ENCODE measurements at regions of chr19 and their contacts with region 1.

Region 1: GRCh38 chr19:38402967-38403861 is at the start of gene FAM98C:
- DNase-seq: peak; percentile 97
- H3K4me3 ChIP-seq: peak within 1 kb of the TSS; percentile 65 to 79 (median 73)
- H3K27ac ChIP-seq: peak within 1 kb of the TSS; percentile 28
- H3K4me1 ChIP-seq: peaks cover 2% of the 10 kb centered on the region
- H3K27me3 ChIP-seq: no peaks in the 10 kb centered on the region
- CTCF ChIP-seq: peak; percentile 89 to 95
- POLR2A ChIP-seq: peak; percentile 36
- total RNA-seq, gene FAM98C: 13.0 and 15.4 TPM in 2 replicates

Region 2: GRCh38 chr19:38229585-38230073 is 173.6 kb before region 1 on chr19:
- CTCF ChIA-PET with region 1: interaction called, 24 read pairs
- POLR2A ChIA-PET with region 1: no interaction called
- dilution Hi-C with region 1: no loop called
- intact Hi-C with region 1: no loop called
- DNase-seq: peak; percentile 77
- H3K4me3 ChIP-seq: peak overlapping the region in 1 of 3 experiments; percentile 14
- H3K27ac ChIP-seq: no peak overlapping the region
- H3K4me1 ChIP-seq: peaks cover 8% of the 10 kb centered on the region
- H3K27me3 ChIP-seq: peaks cover 9 to 14% of the 10 kb centered on the region in 2 experiments
- CTCF ChIP-seq: peak in 1 of 2 donors; percentile 13
- POLR2A ChIP-seq: no peak

Region 3: GRCh38 chr19:38351865-38352395 is 51.3 kb before region 1 on chr19:
- CTCF ChIA-PET with region 1: no interaction called
- POLR2A ChIA-PET with region 1: no interaction called
- dilution Hi-C with region 1: no loop called
- intact Hi-C with region 1: no loop called
- DNase-seq: no peak
- H3K4me3 ChIP-seq: no peak overlapping the region
- H3K27ac ChIP-seq: no peak overlapping the region
- H3K4me1 ChIP-seq: no peaks in the 10 kb centered on the region
- H3K27me3 ChIP-seq: peaks cover 2 to 4% of the 10 kb centered on the region in 2 experiments
- CTCF ChIP-seq: no peak
- POLR2A ChIP-seq: no peak

Region 4: DNA sequence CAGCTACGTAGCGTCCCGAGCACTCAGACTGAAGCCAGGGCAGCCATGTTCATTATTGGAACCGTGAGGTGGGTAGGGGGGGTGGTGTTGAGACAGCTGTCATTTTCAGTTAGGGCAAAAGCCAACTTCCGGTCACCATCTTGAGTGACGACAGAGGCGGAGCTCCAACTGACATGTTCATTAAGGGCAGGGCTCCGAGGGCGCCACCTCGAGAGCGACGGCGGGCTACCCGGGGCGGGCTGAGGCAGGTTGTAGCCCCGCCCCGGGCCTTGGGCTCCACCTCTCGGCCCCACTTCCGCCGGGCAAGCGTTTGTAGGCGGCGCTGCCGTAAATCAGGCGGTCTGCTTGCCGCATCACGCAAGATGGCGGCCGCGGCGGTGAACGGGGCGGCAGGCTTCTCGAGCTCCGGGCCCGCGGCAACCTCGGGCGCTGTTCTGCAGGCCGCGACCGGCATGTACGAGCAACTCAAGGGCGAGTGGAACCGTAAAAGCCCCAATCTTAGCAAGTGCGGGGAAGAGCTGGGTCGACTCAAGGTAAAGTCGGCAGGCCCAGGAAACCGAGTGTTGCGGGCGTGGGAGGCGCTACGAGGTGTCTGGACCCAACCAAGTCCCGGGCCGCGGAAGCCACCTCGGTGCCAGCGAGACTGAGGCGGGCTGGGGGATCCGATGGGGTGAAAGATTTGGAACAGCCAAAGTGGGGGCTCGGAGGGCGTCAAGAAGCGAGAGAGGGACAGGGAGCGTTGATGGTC is 28.6 kb before region 1 on chr19 and contains the start of gene PSMD8:
- CTCF ChIA-PET with region 1: interaction called, 13 read pairs
- POLR2A ChIA-PET with region 1: interaction called, 9 read pairs
- dilution Hi-C with region 1: no loop called
- intact Hi-C with region 1: loop called (anchors 2 kb)
- DNase-seq: peak; percentile 99
- H3K4me3 ChIP-seq: peak within 1 kb of the TSS; percentile 70 to 86 (median 70)
- H3K27ac ChIP-seq: peak within 1 kb of the TSS; percentile 87
- H3K4me1 ChIP-seq: peaks cover 14% of the 10 kb centered on the region
- H3K27me3 ChIP-seq: peaks cover 3 to 4% of the 10 kb centered on the region in 2 experiments
- CTCF ChIP-seq: peak in 1 of 2 donors; percentile 33
- POLR2A ChIP-seq: peak; percentile 98
- total RNA-seq, gene PSMD8: 203 and 215 TPM in 2 replicates

Region 5: GRCh38 chr19:38417544-38418506 is 14.6 kb after region 1 on chr19:
- CTCF ChIA-PET with region 1: interaction called, 11 read pairs
- POLR2A ChIA-PET with region 1: no interaction called
- dilution Hi-C with region 1: no loop called
- intact Hi-C with region 1: no loop called
- DNase-seq: no peak
- H3K4me3 ChIP-seq: no peak overlapping the region
- H3K27ac ChIP-seq: no peak overlapping the region
- H3K4me1 ChIP-seq: no peaks in the 10 kb centered on the region
- H3K27me3 ChIP-seq: no peaks in the 10 kb centered on the region
- CTCF ChIP-seq: no peak
- POLR2A ChIP-seq: no peak

Region 6: DNA sequence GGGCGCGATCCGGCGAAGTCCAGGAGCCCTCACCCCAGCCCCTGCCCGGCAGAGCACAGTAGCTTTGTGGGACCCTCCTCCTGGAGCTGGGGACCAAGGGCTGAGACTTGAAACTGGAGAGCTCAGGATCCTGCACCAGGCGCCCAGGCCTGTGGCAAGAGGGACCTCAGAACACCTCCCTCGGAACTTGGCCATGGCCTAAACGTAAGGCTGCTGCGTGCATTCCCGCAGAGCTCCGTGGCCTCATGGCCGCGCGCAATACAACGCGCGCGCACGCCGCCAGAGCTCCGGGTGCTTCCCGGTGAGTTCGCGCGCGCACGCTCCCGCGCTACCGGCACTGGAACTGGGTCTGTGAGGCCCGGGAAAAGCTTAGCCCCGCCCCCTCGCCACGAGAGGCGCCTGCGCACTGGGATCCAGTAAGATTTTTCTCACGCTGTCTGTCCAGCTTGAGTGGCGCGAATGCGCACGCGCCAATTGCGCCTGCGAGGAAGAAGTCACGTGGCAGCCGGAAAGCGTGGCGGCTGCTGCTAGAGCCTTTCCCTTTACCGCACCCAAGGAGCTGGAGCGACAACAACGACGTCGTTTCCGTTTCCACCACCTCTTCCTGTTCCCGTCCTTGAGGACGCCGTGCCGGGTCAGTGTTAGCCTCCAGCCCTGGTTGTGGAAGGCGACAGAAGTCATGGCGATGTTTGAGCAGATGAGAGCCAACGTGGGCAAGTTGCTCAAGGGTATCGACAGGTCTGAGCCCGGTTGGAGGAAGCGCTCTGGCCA is 215.6 kb after region 1 on chr19 and contains the start of gene EIF3K:
- CTCF ChIA-PET with region 1: interaction called, 16 read pairs
- POLR2A ChIA-PET with region 1: no interaction called
- dilution Hi-C with region 1: no loop called
- intact Hi-C with region 1: no loop called
- DNase-seq: peak; percentile 99
- H3K4me3 ChIP-seq: peak within 1 kb of the TSS; percentile 44 to 99 (median 73)
- H3K27ac ChIP-seq: peak within 1 kb of the TSS; percentile 65
- H3K4me1 ChIP-seq: peaks cover 14% of the 10 kb centered on the region
- H3K27me3 ChIP-seq: no peaks in the 10 kb centered on the region
- CTCF ChIP-seq: no peak
- POLR2A ChIP-seq: peak; percentile 94
- total RNA-seq, gene EIF3K: 267 and 277 TPM in 2 replicates

Region 7: DNA sequence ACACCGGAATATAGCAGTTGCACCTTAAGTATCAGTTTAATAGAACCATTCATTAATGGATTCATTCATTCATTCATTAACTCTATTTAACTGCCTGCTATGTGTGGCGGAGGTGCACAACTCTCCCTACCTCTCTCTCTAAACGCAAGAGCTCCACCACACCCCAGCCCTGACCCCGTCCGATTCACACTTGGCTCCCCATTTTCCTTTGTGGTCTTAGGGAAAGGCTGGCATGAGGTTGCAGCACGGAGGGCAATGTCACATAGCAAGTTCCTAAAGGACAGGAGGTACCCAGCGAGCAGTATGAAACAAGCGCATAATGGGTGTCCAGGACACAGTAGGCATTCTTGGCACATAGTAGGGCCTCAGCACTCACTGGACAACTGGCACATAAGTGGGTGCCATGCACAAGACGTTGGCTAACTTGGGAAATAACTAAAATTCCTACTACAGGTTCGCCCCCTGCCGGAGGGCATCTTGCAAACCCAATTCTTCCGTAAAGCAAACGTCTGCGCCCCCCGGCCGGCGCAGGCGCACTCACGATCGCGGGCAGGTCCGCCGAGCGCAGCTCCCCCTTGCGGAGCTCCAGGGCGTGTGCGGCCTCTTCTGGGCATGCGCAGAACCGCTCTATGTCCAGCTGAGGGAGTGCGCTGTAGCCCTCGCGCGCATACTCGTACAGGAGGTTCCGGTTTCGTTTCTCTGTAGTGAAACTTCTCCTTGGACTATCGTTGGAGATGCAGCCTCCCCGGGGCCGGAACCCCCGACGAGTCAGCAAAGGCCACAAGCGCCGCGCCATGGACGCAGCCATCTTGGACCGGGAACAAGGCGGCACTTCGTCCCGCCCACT is 526.9 kb after region 1 on chr19 and contains the start of gene SARS2:
- CTCF ChIA-PET with region 1: interaction called, 29 read pairs
- POLR2A ChIA-PET with region 1: interaction called, 4 read pairs
- dilution Hi-C with region 1: no loop called
- intact Hi-C with region 1: loop called (anchors 1 kb)
- DNase-seq: peak; percentile 95
- H3K4me3 ChIP-seq: peak within 1 kb of the TSS; percentile 50 to 78 (median 58)
- H3K27ac ChIP-seq: peak within 1 kb of the TSS; percentile 69
- H3K4me1 ChIP-seq: peaks cover 14% of the 10 kb centered on the region
- H3K27me3 ChIP-seq: no peaks in the 10 kb centered on the region
- CTCF ChIP-seq: peak; percentile 99 to 100
- POLR2A ChIP-seq: peak; percentile 85
- total RNA-seq, gene SARS2: 38.5 and 40.3 TPM in 2 replicates